ENCODE measurements at regions of chr12 and their contacts with region 1.

Region 1: DNA sequence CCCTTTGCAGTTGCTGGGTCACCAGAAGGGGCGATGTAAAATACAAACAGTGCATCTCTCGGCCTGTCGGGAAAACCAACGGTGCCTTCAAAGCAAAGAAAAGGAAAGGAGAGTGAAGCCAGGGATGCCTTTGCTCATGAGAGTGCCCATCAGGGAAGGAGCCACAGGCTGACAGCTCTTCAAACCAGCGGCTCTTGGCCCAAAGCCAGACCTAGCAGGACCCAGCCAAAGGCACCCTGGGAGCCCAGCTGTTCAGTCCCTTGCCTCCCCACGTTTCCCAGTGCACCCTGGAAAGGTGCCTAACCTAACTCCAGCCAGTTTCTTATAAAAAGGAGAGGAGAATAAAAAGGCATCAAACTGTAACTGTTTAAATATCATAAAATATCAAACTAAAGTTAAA is 29.2 kb downstream of the PRMT8 start:
- DNase-seq: no peak
- H3K4me3 ChIP-seq: no peak overlapping the region
- H3K4me3 Mint-ChIP-seq: no peak overlapping the region
- H3K27ac Mint-ChIP-seq: no peak overlapping the region
- H3K4me1 ChIP-seq: peaks cover 24% of the 10 kb centered on the region
- H3K4me1 Mint-ChIP-seq: peaks cover 7% of the 10 kb centered on the region
- H3K27me3 ChIP-seq: no peaks in the 10 kb centered on the region
- H3K27me3 Mint-ChIP-seq: peaks cover 5% of the 10 kb centered on the region
- CTCF ChIP-seq: no peak

Region 2: DNA sequence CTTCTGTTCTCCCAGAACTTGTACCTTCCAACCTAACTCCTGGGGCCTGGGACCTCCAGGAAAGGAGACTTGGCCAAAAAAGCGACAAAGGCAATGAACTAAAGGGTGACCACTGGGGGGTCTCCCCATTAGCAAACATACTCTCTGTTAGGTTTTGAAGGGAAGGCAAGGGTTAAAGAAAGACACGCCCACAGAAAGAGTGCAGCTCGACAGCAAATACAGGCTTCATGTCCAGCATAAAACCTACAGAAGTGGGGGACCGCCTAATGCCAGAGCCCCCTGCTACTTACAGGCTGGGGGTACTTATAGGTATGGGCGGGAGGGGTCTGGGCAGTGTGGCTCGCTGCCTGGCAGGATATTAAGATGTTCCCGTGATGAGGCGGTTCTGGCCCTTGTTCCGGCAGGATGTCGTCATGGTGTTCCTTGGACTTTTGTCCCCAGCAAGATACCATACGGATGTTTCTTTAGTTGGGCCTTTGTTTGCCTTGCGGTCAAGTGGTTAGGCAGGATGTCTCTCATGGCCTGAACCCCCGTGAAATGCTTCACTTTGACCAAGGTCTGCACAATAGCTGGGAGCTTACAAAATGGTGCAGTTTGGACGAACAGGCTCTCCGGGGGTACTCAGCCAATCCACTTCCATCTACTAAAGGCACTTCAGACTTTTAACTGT is 24.3 kb after region 1 on chr12:
- CTCF ChIA-PET with region 1: no interaction called
- POLR2A ChIA-PET with region 1: no interaction called
- intact Hi-C with region 1: loop called (anchors 2 kb)
- DNase-seq: peak; percentile 58 to 78
- H3K4me3 ChIP-seq: no peak overlapping the region
- H3K4me3 Mint-ChIP-seq: no peak overlapping the region
- H3K27ac Mint-ChIP-seq: peak overlapping the region; percentile 23
- H3K4me1 ChIP-seq: peaks cover 22% of the 10 kb centered on the region
- H3K4me1 Mint-ChIP-seq: no peaks in the 10 kb centered on the region
- H3K27me3 ChIP-seq: no peaks in the 10 kb centered on the region
- H3K27me3 Mint-ChIP-seq: peaks cover 5% of the 10 kb centered on the region
- CTCF ChIP-seq: no peak

Region 3: DNA sequence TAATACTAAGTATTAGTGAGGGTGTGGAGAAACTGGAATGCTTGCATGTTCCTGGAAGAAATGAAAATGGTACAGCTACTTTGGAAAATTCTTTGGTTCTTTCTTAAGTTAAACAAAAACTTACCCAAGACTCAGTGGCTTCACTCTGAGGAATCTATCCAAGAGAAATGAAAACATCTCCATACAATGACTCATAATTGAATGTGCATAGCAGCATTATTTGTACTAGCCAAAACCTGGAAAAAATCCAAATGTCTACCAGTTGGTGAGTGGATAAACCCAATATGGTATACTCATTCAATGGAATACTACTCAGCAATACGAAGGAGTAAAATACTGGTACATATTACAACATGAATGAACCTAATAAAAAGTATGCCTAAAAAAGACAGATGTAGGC is 250.7 kb after region 1 on chr12:
- CTCF ChIA-PET with region 1: no interaction called
- POLR2A ChIA-PET with region 1: no interaction called
- intact Hi-C with region 1: no loop called
- DNase-seq: no peak
- H3K4me3 ChIP-seq: no peak overlapping the region
- H3K4me3 Mint-ChIP-seq: no peak overlapping the region
- H3K27ac Mint-ChIP-seq: no peak overlapping the region
- H3K4me1 ChIP-seq: no peaks in the 10 kb centered on the region
- H3K4me1 Mint-ChIP-seq: no peaks in the 10 kb centered on the region
- H3K27me3 ChIP-seq: no peaks in the 10 kb centered on the region
- H3K27me3 Mint-ChIP-seq: peaks cover 10% of the 10 kb centered on the region
- CTCF ChIP-seq: no peak